Activated CD4-positive, alpha-beta memory T cell treated with anti-CD3 and anti-CD28 coated beads, Interleukin-2, amount 10 ng/mL, durations not matched to agents 7 days and 5 days (primary cell): ENCODE measurements at regions of chrX and their contacts with region 1.

Region 1: DNA sequence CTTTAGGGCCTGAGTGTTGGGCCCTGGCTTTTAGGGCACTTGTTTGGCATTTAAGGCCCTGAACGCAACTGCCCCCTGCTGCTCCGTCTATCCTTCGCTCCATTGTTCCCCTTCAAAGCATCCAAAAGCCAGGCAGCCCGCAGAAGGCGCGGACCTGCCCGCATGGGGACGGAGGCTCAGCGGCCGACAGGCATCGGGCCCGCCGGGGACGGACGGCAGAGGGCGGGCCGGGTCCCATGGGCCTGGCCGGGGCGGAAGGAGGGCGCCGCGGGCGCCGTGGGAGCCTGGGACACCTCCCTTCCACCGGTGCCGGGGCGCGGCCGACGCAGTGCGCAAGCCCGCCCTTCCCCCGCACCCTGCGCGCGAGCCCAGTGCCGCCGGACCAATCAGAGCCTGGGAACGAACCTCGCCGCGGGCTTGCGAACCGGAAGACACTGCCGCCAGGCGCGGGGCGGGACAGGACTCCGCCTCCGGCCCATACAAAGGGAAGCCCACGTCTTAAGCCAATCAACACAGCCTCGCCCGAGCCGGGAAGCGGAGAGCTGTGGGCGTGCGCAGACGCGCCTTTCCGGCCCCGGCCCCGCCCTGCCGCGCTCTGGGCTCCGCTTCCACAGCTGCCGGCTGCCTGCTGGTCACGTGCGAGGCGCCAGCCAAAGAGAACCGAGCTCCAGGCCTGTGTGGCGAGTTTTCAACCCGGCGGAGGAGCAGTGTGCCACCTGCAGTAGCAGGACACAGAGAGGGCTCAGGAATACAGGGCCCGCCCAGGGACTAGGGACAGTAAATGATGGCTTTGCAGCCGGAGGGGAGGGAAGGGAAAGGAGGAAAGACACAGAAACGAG is 2.1 kb upstream of the ARHGAP4 start:
- DNase-seq: peak; percentile 95
- H3K4me3 Mint-ChIP-seq: peak overlapping the region; percentile 91
- H3K27ac Mint-ChIP-seq: peak overlapping the region; percentile 97
- H3K4me1 Mint-ChIP-seq: peaks cover 34% of the 10 kb centered on the region
- H3K27me3 Mint-ChIP-seq: no peaks in the 10 kb centered on the region

Region 2: GRCh38 chrX:153794018-153794896 is 133.9 kb before region 1 on chrX and contains the starts of genes IDH3G and SSR4:
- CTCF ChIA-PET with region 1: interaction called, 7 read pairs
- POLR2A ChIA-PET with region 1: interaction called, 25 read pairs
- DNase-seq: peak; percentile 94
- H3K4me3 Mint-ChIP-seq: peak within 1 kb of the TSS; percentile 94
- H3K27ac Mint-ChIP-seq: peak within 1 kb of the TSS; percentile 82
- H3K4me1 Mint-ChIP-seq: peaks cover 24% of the 10 kb centered on the region
- H3K27me3 Mint-ChIP-seq: no peaks in the 10 kb centered on the region
- total RNA-seq, gene IDH3G: 62.4 to 64.8 TPM
- total RNA-seq, gene SSR4: 247 to 250 TPM

Region 3: GRCh38 chrX:153909024-153909970 is 18.8 kb before region 1 on chrX:
- CTCF ChIA-PET with region 1: interaction called, 3 read pairs
- POLR2A ChIA-PET with region 1: interaction called, 114 read pairs
- DNase-seq: no peak
- H3K4me3 Mint-ChIP-seq: no peak overlapping the region
- H3K27ac Mint-ChIP-seq: no peak overlapping the region
- H3K4me1 Mint-ChIP-seq: peaks cover 12% of the 10 kb centered on the region
- H3K27me3 Mint-ChIP-seq: no peaks in the 10 kb centered on the region

Region 4: GRCh38 chrX:153947009-153947769 is 19.0 kb after region 1 on chrX:
- CTCF ChIA-PET with region 1: interaction called, 148 read pairs
- POLR2A ChIA-PET with region 1: interaction called, 140 read pairs
- DNase-seq: peak; percentile 79
- H3K4me3 Mint-ChIP-seq: no peak overlapping the region
- H3K27ac Mint-ChIP-seq: peak overlapping the region; percentile 65
- H3K4me1 Mint-ChIP-seq: peaks cover 17% of the 10 kb centered on the region
- H3K27me3 Mint-ChIP-seq: no peaks in the 10 kb centered on the region

Region 5: DNA sequence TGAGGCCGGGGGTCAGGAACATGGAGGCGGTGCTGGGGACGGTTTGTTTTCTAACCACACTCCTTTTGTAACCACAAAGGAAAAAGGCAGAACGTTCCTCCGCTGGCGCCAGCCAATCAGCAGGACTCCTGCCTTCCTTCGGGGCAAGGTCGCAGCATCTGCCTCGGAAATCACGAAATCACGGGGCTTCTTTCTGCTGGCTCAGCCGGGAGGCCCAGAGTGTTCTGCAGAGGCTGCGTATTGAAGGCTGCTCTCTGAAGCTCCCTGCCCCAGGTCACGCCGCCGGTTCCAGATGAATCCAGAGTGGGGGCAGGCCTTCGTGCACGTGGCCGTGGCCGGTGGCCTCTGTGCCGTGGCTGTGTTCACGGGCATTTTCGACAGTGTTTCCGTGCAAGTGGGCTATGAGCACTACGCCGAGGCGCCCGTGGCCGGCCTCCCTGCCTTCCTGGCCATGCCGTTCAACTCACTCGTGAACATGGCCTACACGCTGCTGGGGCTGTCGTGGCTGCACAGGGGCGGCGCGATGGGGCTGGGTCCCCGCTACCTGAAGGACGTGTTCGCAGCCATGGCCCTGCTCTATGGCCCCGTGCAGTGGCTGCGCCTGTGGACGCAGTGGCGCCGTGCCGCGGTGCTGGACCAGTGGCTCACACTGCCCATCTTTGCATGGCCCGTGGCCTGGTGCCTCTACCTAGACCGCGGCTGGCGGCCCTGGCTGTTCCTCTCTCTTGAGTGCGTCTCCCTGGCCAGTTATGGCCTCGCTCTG is 53.8 kb after region 1 on chrX:
- CTCF ChIA-PET with region 1: no interaction called
- POLR2A ChIA-PET with region 1: interaction called, 31 read pairs
- DNase-seq: peak; percentile 83
- H3K4me3 Mint-ChIP-seq: peak overlapping the region; percentile 69
- H3K27ac Mint-ChIP-seq: peak overlapping the region; percentile 93
- H3K4me1 Mint-ChIP-seq: peaks cover 57% of the 10 kb centered on the region
- H3K27me3 Mint-ChIP-seq: no peaks in the 10 kb centered on the region